ENCODE measurements at regions of chr3 and their contacts with region 1.

Region 1: GRCh38 chr3:47791193-47791855 is 9.6 kb upstream of the SMARCC1 start:
- DNase-seq: no peak
- ATAC-seq: no peak
- H3K4me3 ChIP-seq: no peak overlapping the region
- H3K27ac ChIP-seq: no peak overlapping the region
- H3K4me1 ChIP-seq: no peaks in the 10 kb centered on the region
- H3K27me3 ChIP-seq: no peaks in the 10 kb centered on the region
- CTCF ChIP-seq: no peak

Region 2: DNA sequence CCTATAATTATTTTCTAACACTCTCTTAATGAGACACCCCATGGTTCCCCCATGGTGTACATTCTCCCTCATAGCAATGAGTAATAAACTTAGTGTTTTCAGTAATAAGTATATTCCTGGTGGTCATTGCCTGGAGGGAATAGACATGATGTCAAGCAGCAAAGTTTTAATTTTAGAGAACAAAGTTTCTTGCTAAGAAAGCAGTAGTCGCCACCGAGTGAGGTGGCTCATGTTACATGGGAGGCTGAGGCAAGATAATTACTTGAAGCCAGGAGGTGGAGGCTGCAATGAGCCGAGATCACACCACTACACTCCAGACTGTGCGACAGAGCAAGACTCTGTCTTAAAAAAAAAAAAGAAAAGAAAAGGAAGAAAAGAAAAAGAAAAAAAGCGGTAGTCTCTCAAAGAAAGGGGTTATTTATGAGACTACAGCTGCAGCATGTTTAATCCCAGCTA is 275.4 kb before region 1 on chr3:
- intact Hi-C with region 1: loop called (anchors 5 kb)
- DNase-seq: no peak
- ATAC-seq: no peak
- H3K4me3 ChIP-seq: no peak overlapping the region
- H3K27ac ChIP-seq: no peak overlapping the region
- H3K4me1 ChIP-seq: peaks cover 5% of the 10 kb centered on the region
- H3K27me3 ChIP-seq: no peaks in the 10 kb centered on the region
- CTCF ChIP-seq: no peak

Region 3: DNA sequence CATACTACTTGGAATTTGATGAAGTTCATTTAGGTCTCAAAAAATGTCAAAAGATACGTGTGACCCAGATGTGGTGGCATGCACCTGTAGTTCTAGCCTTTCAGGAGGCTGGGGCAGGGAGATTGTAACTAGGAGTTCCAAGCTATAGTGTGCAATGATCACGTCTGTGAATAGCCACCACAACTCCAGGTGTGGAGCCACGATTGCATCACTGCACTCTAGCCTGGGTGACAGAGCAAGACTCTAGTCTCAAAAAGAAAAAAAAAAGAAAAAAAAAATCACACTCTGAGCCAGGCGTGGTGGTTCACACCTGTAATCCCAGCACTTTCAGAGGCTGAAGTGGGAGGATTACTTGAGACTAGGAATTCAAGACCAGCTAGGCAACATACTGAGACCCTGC is 210.7 kb after region 1 on chr3:
- intact Hi-C with region 1: no loop called
- DNase-seq: no peak
- ATAC-seq: no peak
- H3K4me3 ChIP-seq: no peak overlapping the region
- H3K27ac ChIP-seq: no peak overlapping the region
- H3K4me1 ChIP-seq: no peaks in the 10 kb centered on the region
- H3K27me3 ChIP-seq: no peaks in the 10 kb centered on the region
- CTCF ChIP-seq: no peak

Region 4: DNA sequence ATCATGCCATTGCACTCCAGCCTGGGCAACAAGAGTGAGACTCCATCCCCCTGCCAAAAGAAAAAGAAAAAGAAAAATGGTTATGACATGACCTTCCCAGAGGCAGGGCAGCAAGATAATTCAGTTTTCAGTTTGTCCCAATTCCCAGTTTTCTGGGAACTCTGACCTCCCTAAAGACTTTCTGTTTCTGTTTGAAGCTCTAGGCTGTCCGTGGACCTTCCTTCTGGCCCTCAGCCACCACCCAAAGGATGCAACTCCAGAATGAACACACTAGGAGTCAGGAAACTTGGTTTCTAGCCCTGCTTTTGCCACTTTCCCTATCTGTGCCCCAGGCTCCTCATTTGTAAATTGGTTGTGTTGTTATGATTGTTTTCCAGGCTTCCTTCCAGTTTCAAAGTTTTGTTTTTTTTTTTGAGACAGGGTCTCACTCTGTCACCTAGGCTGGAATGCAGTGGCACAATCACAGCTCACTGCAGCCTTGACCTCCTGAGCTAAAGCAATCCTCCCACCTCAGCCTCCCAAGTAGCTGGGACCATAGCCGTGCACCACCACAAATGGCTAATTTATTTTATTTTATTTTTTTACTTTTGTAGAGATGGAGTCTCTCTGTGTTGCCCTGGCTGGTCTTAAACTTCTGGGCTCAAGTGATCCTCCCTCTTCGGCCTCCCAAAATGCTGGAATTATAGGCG is 328.3 kb after region 1 on chr3:
- intact Hi-C with region 1: no loop called
- DNase-seq: no peak
- ATAC-seq: peak; percentile 47
- H3K4me3 ChIP-seq: no peak overlapping the region
- H3K27ac ChIP-seq: peak overlapping the region; percentile 51
- H3K4me1 ChIP-seq: peaks cover 5% of the 10 kb centered on the region
- H3K27me3 ChIP-seq: no peaks in the 10 kb centered on the region
- CTCF ChIP-seq: no peak